HEK293T (cell line): ENCODE measurements at regions of chr20 and their contacts with region 1.

Region 1: DNA sequence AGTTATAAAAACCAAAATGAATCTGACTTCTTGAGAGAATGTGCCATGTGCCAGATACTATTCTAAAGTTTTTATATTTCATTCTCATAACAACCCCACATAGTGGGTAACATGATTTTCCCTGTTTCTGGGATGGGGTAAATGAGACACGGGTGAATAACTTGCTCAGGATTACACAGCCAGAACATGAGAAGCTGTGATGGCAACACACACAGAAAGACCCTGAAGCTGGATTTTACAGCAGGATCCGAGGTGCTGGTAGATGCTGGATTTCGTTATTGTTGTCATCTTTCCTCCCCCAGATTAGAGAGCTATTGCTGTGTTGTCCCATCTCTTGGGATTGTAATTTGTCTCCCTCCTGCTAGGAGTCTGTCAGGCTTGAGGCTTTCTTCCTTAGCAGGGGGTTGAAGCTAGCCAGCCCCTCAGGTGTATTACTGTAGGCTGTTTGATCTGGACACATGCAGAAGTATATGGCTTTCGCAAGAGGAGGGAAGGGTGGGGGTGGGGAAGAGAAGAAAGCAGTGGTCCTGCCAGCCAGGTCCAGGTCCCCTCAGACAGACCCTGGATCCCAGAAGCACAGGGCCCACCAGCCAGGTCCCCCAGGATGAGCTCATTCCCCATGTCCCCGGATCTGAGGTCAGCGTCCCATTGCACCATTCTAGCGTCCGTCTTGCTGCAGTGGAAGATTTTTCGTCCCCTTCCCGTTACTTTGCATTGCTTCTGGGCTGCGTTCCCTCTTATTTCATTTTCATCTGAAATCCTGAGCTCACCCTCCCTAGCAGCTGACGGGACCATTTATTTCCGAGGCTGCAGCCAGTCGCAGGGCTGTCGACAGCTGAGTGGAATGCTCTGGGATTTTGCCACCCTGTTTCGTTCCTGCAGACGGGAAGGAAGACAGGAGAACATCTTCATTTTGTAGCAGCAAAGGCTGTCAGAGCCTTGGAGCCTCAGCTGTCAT is 7.3 kb upstream of the KCNG1 start:
- DNase-seq: no peak

Region 2: DNA sequence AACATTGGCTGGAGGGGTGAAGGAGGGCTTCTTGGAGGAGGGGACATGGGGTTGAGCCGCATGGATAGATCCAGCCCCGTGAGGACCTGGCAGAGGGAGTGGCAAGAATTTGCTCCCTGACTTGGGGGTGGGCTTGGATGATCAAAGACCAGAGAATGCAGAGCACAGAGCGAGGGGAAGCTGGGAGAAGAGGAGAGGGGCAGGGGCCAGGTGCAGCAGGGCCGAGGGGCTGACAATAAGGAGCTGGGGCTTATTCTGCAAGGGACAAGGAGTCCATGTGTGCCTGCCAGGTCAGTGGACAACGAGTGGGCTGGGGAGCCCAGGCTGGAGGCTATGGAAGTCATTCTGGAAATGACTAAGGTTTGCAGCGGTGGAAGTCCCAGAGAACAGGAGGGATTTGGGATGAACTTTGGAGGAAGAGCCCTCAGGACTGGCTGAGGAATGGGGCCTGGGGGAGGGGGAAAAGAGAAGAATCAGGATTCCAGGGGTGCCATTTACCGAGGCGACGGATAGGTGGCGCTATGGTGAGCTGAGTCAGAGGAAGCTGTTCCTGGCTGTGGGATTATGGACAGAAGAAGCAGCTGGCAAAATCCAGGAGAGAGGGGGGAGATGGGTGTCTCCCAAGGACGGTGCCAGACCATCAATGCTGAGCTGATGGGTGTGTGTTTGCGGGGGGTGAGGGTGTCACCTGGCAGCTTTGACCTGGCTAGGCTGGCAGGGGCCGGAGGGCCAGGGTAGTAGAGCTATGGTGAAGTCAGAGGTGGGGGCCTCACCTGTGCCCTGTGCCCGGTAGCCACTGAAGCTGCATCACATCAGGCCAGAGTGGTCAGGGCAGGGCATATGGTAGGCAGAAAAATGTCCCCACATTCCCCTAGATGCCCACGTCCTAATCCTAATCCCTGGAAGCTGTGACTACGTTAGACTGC is 15.2 kb before region 1 on chr20:
- CTCF ChIA-PET with region 1: interaction called, 22 read pairs
- POLR2A ChIA-PET with region 1: interaction called, 8 read pairs
- DNase-seq: peak; percentile 78

Region 3: GRCh38 chr20:51095633-51096513 is 65.6 kb after region 1 on chr20:
- CTCF ChIA-PET with region 1: no interaction called
- POLR2A ChIA-PET with region 1: no interaction called
- DNase-seq: no peak